ENCODE measurements at regions of chr15 and their contacts with region 1.

Region 1: DNA sequence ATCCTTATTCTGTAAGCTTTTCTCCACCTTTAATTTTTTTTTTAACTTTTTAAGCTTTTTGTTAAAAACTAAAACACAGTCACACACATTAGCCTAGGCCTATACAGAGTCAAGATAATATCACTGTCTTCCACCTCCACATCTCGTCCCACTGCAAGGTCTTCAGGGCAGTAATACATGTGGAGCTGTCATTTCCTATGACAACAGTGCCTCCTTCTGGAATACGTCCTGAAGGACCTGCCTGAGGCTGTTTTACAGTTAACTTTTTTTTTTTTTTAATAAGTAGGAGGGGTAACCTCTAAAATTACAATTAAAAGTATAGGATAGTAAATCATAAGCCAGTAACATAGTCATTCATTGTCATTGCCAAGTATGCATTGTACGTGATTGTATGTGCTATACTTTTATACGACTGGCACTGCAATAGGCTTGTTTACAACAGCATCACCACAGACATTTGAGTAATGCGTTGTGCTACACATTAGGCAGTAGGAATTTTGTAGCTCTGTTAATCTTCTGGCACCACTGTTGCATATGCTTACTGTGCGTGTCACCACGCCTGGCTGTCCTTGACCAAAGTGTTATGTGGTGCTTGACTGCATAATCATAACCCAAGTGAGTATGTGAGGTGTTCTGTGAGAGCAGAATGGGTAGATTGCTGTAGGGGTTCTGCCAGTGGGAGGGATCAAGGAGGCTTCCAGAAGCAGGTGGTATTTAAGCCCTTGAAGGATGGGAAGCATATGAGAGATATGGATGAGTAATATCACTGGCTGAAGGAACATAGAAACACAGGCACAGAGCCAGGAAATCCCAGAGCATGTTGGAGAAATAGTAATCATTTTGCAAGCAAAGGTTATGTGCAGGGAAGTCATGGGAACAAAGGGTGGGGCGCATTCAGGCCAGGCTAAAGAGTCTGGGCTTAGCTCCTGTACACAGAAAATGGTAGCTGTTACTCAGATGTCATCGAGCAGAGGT is 18.3 kb downstream of the FBXO22 start:
- DNase-seq: peak; percentile 86

Region 2: DNA sequence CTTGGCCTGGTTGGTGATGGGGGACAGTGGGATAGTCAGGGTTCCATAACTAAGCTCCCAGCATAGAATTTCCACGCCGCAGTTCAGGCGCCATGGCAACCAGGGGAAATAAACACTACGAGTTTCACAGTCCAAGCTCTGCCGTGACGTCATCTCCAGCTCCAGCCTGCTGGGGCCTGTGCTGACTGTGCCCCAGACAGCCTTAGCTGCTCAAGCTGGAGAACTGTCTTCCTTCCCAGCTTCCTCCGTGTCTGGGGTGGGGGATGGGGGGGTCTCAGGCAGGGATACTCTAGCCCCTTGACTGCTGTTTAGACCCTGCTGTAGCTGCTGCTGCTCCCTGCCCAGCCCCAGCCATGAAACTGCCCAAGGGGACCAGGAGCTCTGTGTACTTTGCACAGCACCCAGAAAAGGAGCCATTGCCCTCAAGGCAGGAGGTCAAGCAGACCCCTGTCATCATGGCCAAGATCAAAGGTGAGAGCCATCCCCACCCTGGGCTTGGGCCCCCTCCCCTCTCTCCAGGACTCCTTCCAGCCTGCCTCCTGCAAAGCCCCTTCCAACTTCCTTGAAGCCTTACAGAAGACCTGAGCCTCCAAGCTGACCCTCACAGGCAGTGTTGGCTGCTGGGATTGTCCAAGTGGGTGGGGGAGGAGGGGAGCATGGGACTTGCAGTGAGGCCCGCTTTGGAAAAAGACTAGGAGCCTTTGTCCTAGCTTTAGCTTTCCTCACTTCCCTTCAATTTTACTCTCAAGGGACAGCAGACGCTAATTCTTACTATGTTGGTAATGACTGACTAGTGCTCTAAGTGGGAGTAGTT is 198.0 kb before region 1 on chr15:
- in situ Hi-C with region 1: loop called (anchors 10 kb)
- DNase-seq: peak; percentile 66

Region 3: DNA sequence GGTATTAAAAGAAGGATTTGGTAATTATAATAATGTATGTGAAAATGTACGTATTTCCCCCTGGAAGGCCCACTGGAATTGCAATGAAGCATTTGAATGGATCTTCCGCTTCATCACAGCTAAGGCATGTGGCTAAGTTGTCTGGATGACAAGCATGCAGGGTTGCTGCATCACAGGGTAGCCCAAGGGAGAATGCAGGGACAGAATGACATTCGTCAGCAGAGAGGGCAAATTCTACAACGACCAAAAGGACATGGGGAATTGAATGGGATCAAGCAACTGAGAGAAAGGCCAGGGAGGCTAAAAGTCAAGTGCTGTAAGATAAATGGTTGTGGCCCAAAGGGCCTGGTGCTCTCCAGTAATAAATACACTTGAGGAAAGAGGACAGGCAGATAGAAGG is 510.0 kb after region 1 on chr15:
- in situ Hi-C with region 1: no loop called
- DNase-seq: no peak